ENCODE measurements at regions of chr7 and their contacts with region 1.

Region 1: DNA sequence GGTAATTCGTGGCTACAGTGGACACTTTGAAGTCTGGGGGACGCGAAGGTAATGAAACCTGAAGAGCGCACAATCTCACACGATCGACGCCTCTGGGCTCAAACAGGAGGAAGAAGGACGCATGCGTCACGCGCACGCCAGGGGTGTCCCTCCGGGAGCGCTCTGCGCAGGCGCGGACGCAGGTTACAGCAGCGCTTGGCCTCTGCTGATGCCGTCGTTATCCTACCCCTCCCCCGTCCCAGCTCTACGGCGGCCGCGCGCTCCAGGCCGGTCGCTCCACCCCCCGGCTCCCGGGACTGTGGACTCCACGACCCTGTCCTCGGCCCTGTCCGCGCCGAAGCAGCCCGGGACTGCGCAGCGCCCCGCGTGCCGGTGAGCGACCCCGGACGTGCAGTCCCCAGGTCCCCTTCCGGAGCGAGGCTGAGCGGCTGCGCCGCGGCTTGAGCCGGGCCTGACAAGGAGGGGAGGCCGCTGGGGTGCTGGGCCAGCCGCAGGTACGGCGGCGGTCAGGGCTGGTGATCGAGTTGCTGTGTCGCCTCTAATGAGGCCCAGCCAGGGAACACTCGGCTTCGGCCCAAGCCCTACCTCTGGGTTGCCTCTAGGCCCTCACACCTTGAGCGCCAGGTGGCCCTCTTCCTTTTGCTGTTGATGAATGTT is at the start of gene TMEM106B:
- DNase-seq: peak; percentile 97
- H3K4me3 ChIP-seq: peak within 1 kb of the TSS; percentile 63 to 87 (median 85)
- H3K27ac ChIP-seq: peak within 1 kb of the TSS; percentile 53
- H3K4me1 ChIP-seq: peaks cover 10% of the 10 kb centered on the region
- H3K27me3 ChIP-seq: peaks cover 0 to 17% of the 10 kb centered on the region in 2 experiments
- CTCF ChIP-seq: no peak
- POLR2A ChIP-seq: peak; percentile 88
- total RNA-seq, gene TMEM106B: 23.0 and 23.1 TPM in 2 replicates

Region 2: GRCh38 chr7:11427686-11428273 is 783.4 kb before region 1 on chr7:
- CTCF ChIA-PET with region 1: interaction called, 3 read pairs
- POLR2A ChIA-PET with region 1: no interaction called
- dilution Hi-C with region 1: no loop called
- intact Hi-C with region 1: loop called (anchors 2 kb)
- DNase-seq: peak; percentile 86
- H3K4me3 ChIP-seq: no peak overlapping the region
- H3K27ac ChIP-seq: peak overlapping the region; percentile 1
- H3K4me1 ChIP-seq: peaks cover 5% of the 10 kb centered on the region
- H3K27me3 ChIP-seq: no peaks in the 10 kb centered on the region
- CTCF ChIP-seq: peak; percentile 43 to 48
- POLR2A ChIP-seq: no peak

Region 3: DNA sequence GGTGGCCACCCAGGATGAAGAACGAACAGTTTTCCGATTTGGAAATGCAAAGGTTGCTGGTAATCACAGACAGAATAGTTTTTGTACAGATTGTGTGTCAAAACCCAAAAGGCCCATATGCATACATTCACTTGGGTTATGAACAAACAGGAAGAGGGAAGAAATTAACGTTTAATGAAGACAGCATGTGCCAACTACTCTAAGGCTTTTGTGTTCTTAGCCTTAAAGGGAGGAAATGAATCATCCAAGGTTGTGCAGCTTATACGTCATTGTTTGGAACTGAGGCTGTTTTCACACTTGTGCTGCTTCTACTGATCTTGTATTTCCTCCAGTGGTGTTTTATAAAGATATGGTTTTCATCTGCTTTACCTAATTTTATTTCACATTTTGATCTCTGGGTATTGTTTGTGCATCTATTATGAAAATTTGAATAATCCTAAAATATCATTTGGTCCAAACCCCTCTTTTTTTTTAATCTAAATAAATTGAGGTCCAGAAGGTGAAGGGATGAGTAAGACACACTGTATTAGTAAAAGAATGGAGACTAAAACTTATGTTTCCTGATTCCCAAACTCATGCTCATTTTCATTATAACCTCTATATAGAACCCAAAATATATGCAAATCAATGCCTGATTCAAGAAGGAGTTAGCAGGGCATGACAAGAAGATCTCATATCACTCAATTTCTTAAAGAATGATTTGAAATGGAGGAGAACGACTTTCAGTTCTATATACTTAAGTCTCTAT is 752.3 kb before region 1 on chr7:
- CTCF ChIA-PET with region 1: no interaction called
- POLR2A ChIA-PET with region 1: no interaction called
- dilution Hi-C with region 1: no loop called
- intact Hi-C with region 1: loop called (anchors 5 kb)
- DNase-seq: peak; percentile 96
- H3K4me3 ChIP-seq: peak overlapping the region in 1 of 3 experiments; percentile 10
- H3K27ac ChIP-seq: peak overlapping the region; percentile 93
- H3K4me1 ChIP-seq: peaks cover 23% of the 10 kb centered on the region
- H3K27me3 ChIP-seq: no peaks in the 10 kb centered on the region
- CTCF ChIP-seq: no peak
- POLR2A ChIP-seq: peak; percentile 51

Region 4: GRCh38 chr7:12162415-12163113 is 48.6 kb before region 1 on chr7:
- CTCF ChIA-PET with region 1: interaction called, 7 read pairs
- POLR2A ChIA-PET with region 1: no interaction called
- dilution Hi-C with region 1: no loop called
- intact Hi-C with region 1: loop called (anchors 5 kb)
- DNase-seq: peak; percentile 89
- H3K4me3 ChIP-seq: no peak overlapping the region
- H3K27ac ChIP-seq: peak overlapping the region; percentile 48
- H3K4me1 ChIP-seq: peaks cover 16% of the 10 kb centered on the region
- H3K27me3 ChIP-seq: no peaks in the 10 kb centered on the region
- CTCF ChIP-seq: no peak
- POLR2A ChIP-seq: no peak

Region 5: GRCh38 chr7:12226756-12227155 is 15.6 kb after region 1 on chr7:
- CTCF ChIA-PET with region 1: no interaction called
- POLR2A ChIA-PET with region 1: no interaction called
- dilution Hi-C with region 1: no loop called
- intact Hi-C with region 1: loop called (anchors 2 kb)
- DNase-seq: no peak
- H3K4me3 ChIP-seq: no peak overlapping the region
- H3K27ac ChIP-seq: no peak overlapping the region
- H3K4me1 ChIP-seq: no peaks in the 10 kb centered on the region
- H3K27me3 ChIP-seq: no peaks in the 10 kb centered on the region
- CTCF ChIP-seq: no peak
- POLR2A ChIP-seq: no peak

Region 6: DNA sequence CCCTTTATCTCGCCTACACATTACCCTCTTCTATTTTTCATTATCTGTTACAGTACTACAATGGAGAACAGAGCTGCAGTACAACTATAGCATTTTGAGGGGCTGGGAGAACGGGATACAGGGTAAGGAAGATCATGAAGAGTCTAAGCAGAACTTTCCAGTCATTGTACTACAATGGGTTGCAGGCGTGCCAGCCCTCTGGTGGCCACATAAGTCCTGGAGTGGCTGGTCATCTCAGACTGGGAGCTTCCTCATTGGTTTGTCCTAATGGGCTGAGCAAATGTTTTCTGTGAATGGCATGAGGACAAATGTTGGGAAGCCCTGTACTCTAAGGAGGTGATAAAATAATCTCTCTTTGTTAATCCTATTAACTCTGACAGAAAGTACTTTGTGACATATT is 32.9 kb after region 1 on chr7:
- CTCF ChIA-PET with region 1: interaction called, 10 read pairs
- POLR2A ChIA-PET with region 1: no interaction called
- dilution Hi-C with region 1: no loop called
- intact Hi-C with region 1: no loop called
- DNase-seq: peak; percentile 36
- H3K4me3 ChIP-seq: no peak overlapping the region
- H3K27ac ChIP-seq: no peak overlapping the region
- H3K4me1 ChIP-seq: no peaks in the 10 kb centered on the region
- H3K27me3 ChIP-seq: no peaks in the 10 kb centered on the region
- CTCF ChIP-seq: peak; percentile 48 to 64
- POLR2A ChIP-seq: no peak